CD4-positive, alpha-beta T cell (primary cell): ENCODE measurements at regions of chr20 and their contacts with region 1.

Region 1: GRCh38 chr20:62500237-62500864 is 24.6 kb upstream of the GATA5 start:
- DNase-seq: peak; percentile 70 to 88 (median 79)
- ATAC-seq: peak; percentile 72
- H3K4me3 ChIP-seq: no peak overlapping the region
- H3K4me3 Mint-ChIP-seq: no peak overlapping the region
- H3K27ac ChIP-seq: no peak overlapping the region
- H3K27ac Mint-ChIP-seq: no peak overlapping the region
- H3K4me1 ChIP-seq: peaks cover 25% of the 10 kb centered on the region
- H3K4me1 Mint-ChIP-seq: peaks cover 12% of the 10 kb centered on the region
- H3K27me3 ChIP-seq: peaks cover 0 to 4% of the 10 kb centered on the region in 2 experiments
- H3K27me3 Mint-ChIP-seq: no peaks in the 10 kb centered on the region
- CTCF ChIP-seq: peak; percentile 71

Region 2: DNA sequence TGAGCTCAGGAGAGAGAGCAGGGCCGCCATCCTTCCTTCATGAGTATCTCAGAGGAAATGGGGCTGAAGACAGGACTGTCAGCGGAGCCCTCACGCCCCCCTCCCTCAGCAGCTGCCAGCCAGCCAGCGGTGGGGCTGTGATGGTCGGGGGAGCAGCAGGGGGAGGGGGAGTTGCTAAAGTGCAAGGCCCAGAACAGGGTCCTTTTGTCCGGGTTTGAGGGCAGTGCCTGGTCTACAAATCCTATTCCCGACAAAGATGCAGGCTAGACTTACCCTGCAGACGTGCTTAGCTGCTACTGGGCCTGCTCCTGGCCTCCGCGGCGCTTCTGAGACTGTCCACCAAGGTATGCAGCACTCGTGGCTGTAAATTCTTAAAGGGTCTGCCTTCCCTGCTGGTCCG is 1841.7 kb before region 1 on chr20:
- CTCF ChIA-PET with region 1: no interaction called
- POLR2A ChIA-PET with region 1: no interaction called
- intact Hi-C with region 1: no loop called
- DNase-seq: no peak
- ATAC-seq: no peak
- H3K4me3 ChIP-seq: no peak overlapping the region
- H3K4me3 Mint-ChIP-seq: no peak overlapping the region
- H3K27ac ChIP-seq: no peak overlapping the region
- H3K27ac Mint-ChIP-seq: no peak overlapping the region
- H3K4me1 ChIP-seq: no peaks in the 10 kb centered on the region
- H3K4me1 Mint-ChIP-seq: no peaks in the 10 kb centered on the region
- H3K27me3 ChIP-seq: peaks cover 0 to 2% of the 10 kb centered on the region in 2 experiments
- H3K27me3 Mint-ChIP-seq: peaks cover 11% of the 10 kb centered on the region
- CTCF ChIP-seq: no peak

Region 3: DNA sequence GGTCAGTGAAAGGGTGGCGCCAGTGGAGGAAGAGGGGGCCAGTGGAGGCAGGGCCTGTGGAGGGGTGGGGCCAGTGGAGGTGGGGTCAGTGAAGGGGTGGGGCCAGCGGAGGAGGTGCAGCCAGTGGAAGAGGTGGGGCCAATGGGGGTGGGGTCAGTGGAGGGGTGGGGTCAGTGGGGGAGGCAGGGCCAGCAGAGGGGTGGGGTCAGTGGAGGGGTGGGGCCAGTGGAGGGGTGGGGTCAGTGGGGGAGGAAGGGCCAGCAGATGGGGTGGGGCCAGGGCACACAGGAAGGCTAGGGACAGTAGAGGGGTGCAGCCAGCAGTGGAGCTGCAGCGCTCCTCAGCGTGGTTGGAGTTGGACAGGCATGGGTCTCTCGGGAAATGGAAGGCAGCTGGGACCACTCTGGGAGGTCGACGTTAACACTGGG is 178.8 kb before region 1 on chr20:
- CTCF ChIA-PET with region 1: no interaction called
- POLR2A ChIA-PET with region 1: no interaction called
- intact Hi-C with region 1: no loop called
- DNase-seq: peak in 2 of 14 experiments; percentile 28 to 48
- ATAC-seq: peak; percentile 37
- H3K4me3 ChIP-seq: no peak overlapping the region
- H3K4me3 Mint-ChIP-seq: no peak overlapping the region
- H3K27ac ChIP-seq: no peak overlapping the region
- H3K27ac Mint-ChIP-seq: no peak overlapping the region
- H3K4me1 ChIP-seq: no peaks in the 10 kb centered on the region
- H3K4me1 Mint-ChIP-seq: no peaks in the 10 kb centered on the region
- H3K27me3 ChIP-seq: no peaks in the 10 kb centered on the region
- H3K27me3 Mint-ChIP-seq: no peaks in the 10 kb centered on the region
- CTCF ChIP-seq: no peak

Region 4: GRCh38 chr20:62616728-62617621 is 116.6 kb after region 1 on chr20:
- CTCF ChIA-PET with region 1: interaction called, 19 read pairs
- POLR2A ChIA-PET with region 1: no interaction called
- intact Hi-C with region 1: loop called (anchors 1 to 2 kb)
- DNase-seq: peak; percentile 44 to 82 (median 58)
- ATAC-seq: peak; percentile 88
- H3K4me3 ChIP-seq: no peak overlapping the region
- H3K4me3 Mint-ChIP-seq: peak overlapping the region; percentile 42
- H3K27ac ChIP-seq: no peak overlapping the region
- H3K27ac Mint-ChIP-seq: peak overlapping the region; percentile 44
- H3K4me1 ChIP-seq: peaks cover 27% of the 10 kb centered on the region
- H3K4me1 Mint-ChIP-seq: peaks cover 15% of the 10 kb centered on the region
- H3K27me3 ChIP-seq: no peaks in the 10 kb centered on the region
- H3K27me3 Mint-ChIP-seq: no peaks in the 10 kb centered on the region
- CTCF ChIP-seq: peak; percentile 82

Region 5: GRCh38 chr20:62668441-62669027 is 168.2 kb after region 1 on chr20:
- CTCF ChIA-PET with region 1: no interaction called
- POLR2A ChIA-PET with region 1: no interaction called
- intact Hi-C with region 1: loop called (anchors 5 kb)
- DNase-seq: peak in 11 of 14 experiments; percentile 24 to 72 (median 42)
- ATAC-seq: peak; percentile 52
- H3K4me3 ChIP-seq: no peak overlapping the region
- H3K4me3 Mint-ChIP-seq: no peak overlapping the region
- H3K27ac ChIP-seq: no peak overlapping the region
- H3K27ac Mint-ChIP-seq: no peak overlapping the region
- H3K4me1 ChIP-seq: no peaks in the 10 kb centered on the region
- H3K4me1 Mint-ChIP-seq: no peaks in the 10 kb centered on the region
- H3K27me3 ChIP-seq: no peaks in the 10 kb centered on the region
- H3K27me3 Mint-ChIP-seq: no peaks in the 10 kb centered on the region
- CTCF ChIP-seq: peak; percentile 83

Region 6: GRCh38 chr20:62808211-62808865 is 308.0 kb after region 1 on chr20:
- CTCF ChIA-PET with region 1: interaction called, 20 read pairs
- POLR2A ChIA-PET with region 1: interaction called, 3 read pairs
- intact Hi-C with region 1: loop called (anchors 1 kb)
- DNase-seq: peak; percentile 64 to 85 (median 72)
- ATAC-seq: peak; percentile 58
- H3K4me3 ChIP-seq: no peak overlapping the region
- H3K4me3 Mint-ChIP-seq: peak overlapping the region; percentile 89
- H3K27ac ChIP-seq: no peak overlapping the region
- H3K27ac Mint-ChIP-seq: peak overlapping the region; percentile 84
- H3K4me1 ChIP-seq: peaks cover 41% of the 10 kb centered on the region
- H3K4me1 Mint-ChIP-seq: peaks cover 28% of the 10 kb centered on the region
- H3K27me3 ChIP-seq: no peaks in the 10 kb centered on the region
- H3K27me3 Mint-ChIP-seq: peaks cover 4% of the 10 kb centered on the region
- CTCF ChIP-seq: peak; percentile 91